Activated B cell treated with CpG ODN at 0.5 μM for 24 hours (primary cell): ENCODE measurements at regions of chr19 and their contacts with region 1.

Region 1: DNA sequence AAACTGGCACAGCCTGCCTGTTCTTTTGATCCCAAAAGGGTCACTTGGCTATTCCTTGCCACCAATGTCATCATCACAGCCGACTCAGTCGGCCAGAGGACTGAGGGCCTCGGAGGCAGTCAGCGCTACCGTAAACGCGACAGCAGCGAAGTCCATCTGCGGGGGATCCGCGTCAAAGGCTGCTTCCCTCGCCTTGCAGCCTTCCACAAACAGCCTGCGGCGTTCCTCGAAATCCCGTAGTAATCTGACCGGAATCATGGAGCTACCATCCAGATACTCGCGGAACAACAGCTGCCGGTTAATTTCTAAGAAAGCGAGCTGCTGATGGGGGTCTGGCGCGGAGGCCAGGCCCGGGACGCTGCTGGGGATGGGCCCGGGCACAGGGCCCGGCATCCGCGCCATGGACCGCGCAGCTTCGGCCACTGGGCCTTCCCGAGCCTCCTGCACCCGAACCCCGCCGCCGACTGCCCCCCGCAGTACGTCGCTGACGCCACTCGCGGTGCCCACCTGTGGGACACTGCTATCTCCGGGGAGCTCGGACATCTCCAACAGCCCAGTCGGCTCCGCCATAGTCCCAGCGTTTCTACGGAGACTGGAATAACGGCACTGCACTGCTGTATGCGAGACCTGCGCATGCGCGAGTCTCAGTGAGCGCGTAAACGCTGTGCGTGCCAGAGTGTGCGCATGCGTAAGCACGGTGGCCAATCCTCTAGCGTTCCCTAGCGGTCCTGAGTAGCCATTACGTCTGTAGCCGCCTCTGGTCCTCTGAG is at the start of gene EID2B:
- DNase-seq: peak; percentile 88
- ATAC-seq: peak; percentile 99
- H3K4me3 Mint-ChIP-seq: peak within 1 kb of the TSS; percentile 95
- H3K27ac Mint-ChIP-seq: peak within 1 kb of the TSS; percentile 86
- H3K4me1 Mint-ChIP-seq: peaks cover 18% of the 10 kb centered on the region
- H3K27me3 Mint-ChIP-seq: no peaks in the 10 kb centered on the region
- CTCF ChIP-seq: peak; percentile 96
- total RNA-seq, gene EID2B: 3.3 and 4.0 TPM in 2 replicates

Region 2: DNA sequence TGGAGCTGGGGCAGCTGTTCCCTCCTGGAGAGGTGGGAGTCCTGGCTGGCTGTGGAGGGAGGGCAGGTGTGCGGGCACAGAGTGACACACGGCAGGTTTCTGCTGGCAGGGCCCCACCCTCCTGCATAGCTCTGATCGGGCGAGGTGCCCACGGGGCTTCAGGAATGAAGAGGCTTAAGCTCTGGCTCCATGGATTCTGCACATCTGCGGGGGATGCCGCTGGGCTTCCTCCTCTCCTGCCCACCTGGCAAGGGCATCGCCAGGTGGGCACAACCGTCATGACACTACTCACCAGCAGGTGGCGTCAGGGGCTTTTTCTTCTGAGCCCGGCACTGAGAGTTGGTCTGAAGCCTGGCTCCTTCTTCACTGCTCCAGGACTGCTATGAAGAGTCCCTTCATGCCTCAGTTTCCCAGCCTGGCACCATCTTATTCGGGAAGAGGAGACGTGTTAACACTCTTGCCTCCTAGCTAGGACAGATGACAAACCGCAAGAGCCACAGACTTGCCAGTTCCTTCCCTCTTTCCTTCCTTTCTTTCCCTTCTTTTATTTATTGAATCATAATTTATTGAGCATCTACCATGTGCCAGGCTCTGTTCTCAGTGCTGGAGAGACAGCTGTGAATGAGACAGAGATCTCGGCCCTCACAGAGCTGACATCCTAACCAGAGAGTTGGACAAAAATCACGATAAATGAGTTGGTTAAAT is 422.0 kb before region 1 on chr19:
- CTCF ChIA-PET with region 1: no interaction called
- POLR2A ChIA-PET with region 1: no interaction called
- intact Hi-C with region 1: loop called (anchors 1 kb)
- DNase-seq: peak; percentile 66
- ATAC-seq: peak; percentile 87
- H3K4me3 Mint-ChIP-seq: no peak overlapping the region
- H3K27ac Mint-ChIP-seq: no peak overlapping the region
- H3K4me1 Mint-ChIP-seq: peaks cover 3% of the 10 kb centered on the region
- H3K27me3 Mint-ChIP-seq: peaks cover 7% of the 10 kb centered on the region
- CTCF ChIP-seq: no peak

Region 3: GRCh38 chr19:39212375-39212742 is 320.1 kb before region 1 on chr19:
- CTCF ChIA-PET with region 1: no interaction called
- POLR2A ChIA-PET with region 1: no interaction called
- intact Hi-C with region 1: loop called (anchors 5 kb)
- DNase-seq: no peak
- ATAC-seq: peak; percentile 40
- H3K4me3 Mint-ChIP-seq: no peak overlapping the region
- H3K27ac Mint-ChIP-seq: no peak overlapping the region
- H3K4me1 Mint-ChIP-seq: no peaks in the 10 kb centered on the region
- H3K27me3 Mint-ChIP-seq: peaks cover 10% of the 10 kb centered on the region
- CTCF ChIP-seq: no peak

Region 4: DNA sequence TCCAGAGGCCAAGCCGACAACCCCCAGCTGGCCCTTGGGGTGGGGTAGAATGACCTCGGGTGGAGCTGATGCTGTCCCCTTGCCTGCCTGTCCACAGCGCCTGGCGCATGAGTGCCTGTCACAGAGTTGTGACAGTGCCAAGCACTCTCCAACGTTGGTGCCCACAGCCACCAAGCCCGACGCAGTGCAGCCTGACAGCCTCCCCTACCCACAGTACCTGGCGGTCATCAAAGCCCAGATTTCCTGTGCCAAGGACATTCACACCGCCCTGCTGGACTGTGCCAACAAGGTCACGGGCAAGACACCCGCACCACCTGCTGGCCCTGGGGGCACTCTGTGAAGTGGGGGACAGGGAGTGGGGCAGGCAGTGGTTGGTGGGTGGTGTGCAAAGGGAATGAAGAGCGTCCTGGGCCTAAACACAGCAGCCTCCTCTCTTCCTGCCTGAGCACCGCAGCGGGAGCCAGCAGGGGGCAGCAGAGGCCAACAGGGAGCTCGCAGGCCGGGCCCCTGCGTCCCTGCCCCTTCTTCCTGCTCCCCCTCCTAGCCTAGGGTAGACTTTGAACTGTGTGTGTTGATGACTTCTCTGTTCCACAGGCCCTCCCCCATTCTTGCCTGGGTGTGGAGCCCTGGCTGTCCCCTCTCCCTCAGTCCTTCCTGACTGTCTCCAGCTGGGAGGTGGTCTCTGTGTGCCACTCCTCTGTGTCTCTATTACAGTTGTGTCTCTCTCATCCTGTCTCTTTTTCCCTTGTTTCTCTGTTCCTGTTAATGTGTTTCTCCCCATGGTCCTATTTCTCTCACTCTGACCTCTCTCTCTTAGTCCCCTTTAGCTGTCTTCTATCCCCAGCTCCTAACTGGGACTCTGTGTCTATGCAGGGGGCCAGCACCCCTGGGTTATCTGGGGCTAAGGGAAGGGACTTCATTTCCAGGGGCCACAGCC is 134.8 kb before region 1 on chr19:
- CTCF ChIA-PET with region 1: interaction called, 6 read pairs
- POLR2A ChIA-PET with region 1: interaction called, 6 read pairs
- intact Hi-C with region 1: loop called (anchors 1 kb)
- DNase-seq: peak; percentile 91
- ATAC-seq: peak; percentile 59
- H3K4me3 Mint-ChIP-seq: peak overlapping the region; percentile 67
- H3K27ac Mint-ChIP-seq: peak overlapping the region; percentile 91
- H3K4me1 Mint-ChIP-seq: peaks cover 62% of the 10 kb centered on the region
- H3K27me3 Mint-ChIP-seq: no peaks in the 10 kb centered on the region
- CTCF ChIP-seq: peak; percentile 84

Region 5: GRCh38 chr19:39435499-39436349 is 96.7 kb before region 1 on chr19 and contains the start of gene RPS16:
- CTCF ChIA-PET with region 1: interaction called, 20 read pairs
- POLR2A ChIA-PET with region 1: interaction called, 17 read pairs
- intact Hi-C with region 1: loop called (anchors 1 kb)
- DNase-seq: peak; percentile 98
- ATAC-seq: peak; percentile 92
- H3K4me3 Mint-ChIP-seq: peak within 1 kb of the TSS; percentile 98
- H3K27ac Mint-ChIP-seq: peak within 1 kb of the TSS; percentile 96
- H3K4me1 Mint-ChIP-seq: peaks cover 53% of the 10 kb centered on the region
- H3K27me3 Mint-ChIP-seq: no peaks in the 10 kb centered on the region
- CTCF ChIP-seq: no peak
- total RNA-seq, gene RPS16: 4,002 and 4,656 TPM in 2 replicates

Region 6: GRCh38 chr19:39502640-39503417 is 29.6 kb before region 1 on chr19:
- CTCF ChIA-PET with region 1: interaction called, 4 read pairs
- POLR2A ChIA-PET with region 1: interaction called, 5 read pairs
- intact Hi-C with region 1: loop called (anchors 1 kb)
- DNase-seq: peak; percentile 81
- ATAC-seq: peak; percentile 62
- H3K4me3 Mint-ChIP-seq: no peak overlapping the region
- H3K27ac Mint-ChIP-seq: no peak overlapping the region
- H3K4me1 Mint-ChIP-seq: peaks cover 41% of the 10 kb centered on the region
- H3K27me3 Mint-ChIP-seq: peaks cover 46% of the 10 kb centered on the region
- CTCF ChIP-seq: no peak

Region 7: DNA sequence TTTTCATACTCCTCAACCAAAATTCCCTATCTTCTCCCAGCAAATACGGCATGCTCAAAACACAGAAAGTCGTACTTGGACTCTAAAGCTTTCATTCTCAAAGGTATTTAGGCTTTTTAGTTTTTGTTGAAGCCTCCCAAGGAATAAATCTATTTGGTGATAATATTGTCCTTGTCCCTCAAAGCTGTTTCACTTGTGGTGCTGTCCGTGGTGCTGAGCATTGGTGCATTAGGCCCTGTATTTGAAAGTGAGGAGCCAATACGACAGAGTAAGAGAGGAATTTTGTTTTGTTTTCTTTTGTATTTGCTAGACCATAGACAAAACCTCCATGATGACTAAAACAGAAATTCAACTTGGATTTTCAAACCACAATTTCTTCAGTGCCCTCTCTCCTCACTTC is 66.7 kb after region 1 on chr19:
- CTCF ChIA-PET with region 1: no interaction called
- POLR2A ChIA-PET with region 1: no interaction called
- intact Hi-C with region 1: no loop called
- DNase-seq: no peak
- ATAC-seq: no peak
- H3K4me3 Mint-ChIP-seq: no peak overlapping the region
- H3K27ac Mint-ChIP-seq: no peak overlapping the region
- H3K4me1 Mint-ChIP-seq: no peaks in the 10 kb centered on the region
- H3K27me3 Mint-ChIP-seq: peaks cover 39% of the 10 kb centered on the region
- CTCF ChIP-seq: no peak